Mucosa of descending colon (tissue), 3 donors: ENCODE measurements at regions of chr5 and their contacts with region 1.

Region 1: DNA sequence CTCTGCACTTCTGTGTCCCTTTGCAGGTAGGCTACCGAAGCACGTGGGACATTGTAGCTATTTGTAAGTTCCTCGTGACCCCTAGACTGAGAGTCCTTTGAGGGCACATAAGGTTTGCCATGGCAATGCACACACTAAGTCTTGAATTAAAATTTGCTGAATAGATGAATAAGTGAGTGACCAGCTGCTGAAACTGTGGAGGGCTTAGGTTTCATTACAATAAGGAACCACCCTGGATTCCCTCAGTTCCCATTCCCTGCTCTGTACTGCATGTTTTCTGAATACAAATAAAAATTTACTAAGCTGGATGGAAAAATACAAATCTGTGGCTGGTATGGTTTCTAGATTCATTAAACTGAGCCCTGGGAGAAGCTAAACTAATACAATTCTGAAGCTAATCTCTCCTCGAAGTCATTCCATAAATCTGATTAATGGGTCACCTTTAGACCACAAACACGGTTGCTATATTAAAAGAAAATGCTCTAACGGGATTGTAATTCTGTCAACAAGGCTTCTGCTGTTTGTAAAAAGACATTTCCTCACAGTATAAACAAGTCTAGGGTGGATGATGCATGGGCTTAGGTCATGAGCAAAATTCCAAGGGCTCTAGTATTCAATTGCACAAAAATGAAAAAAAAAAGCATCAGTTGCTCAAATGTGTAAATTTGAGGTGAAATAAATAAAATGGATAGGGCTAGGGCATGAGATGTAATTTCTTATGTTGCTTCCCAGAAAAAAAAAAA is 172.3 kb downstream of the ATP10B start:
- DNase-seq: no peak
- ATAC-seq: no peak
- H3K4me3 ChIP-seq: no peak overlapping the region
- H3K4me1 ChIP-seq: peaks cover 15% of the 10 kb centered on the region
- CTCF ChIP-seq: no peak

Region 2: GRCh38 chr5:160787240-160787639 is 107.5 kb after region 1 on chr5:
- intact Hi-C with region 1: loop called in 1 of 2 experiments (anchors 5 kb)
- DNase-seq: peak; percentile 75 to 83 (median 83)
- ATAC-seq: peak; percentile 92
- H3K4me3 ChIP-seq: no peak overlapping the region
- H3K4me1 ChIP-seq: peaks cover 8% of the 10 kb centered on the region
- CTCF ChIP-seq: peak; percentile 53